GM10248 (cell line): ENCODE measurements at regions of chr21 and their contacts with region 1.

Region 1: DNA sequence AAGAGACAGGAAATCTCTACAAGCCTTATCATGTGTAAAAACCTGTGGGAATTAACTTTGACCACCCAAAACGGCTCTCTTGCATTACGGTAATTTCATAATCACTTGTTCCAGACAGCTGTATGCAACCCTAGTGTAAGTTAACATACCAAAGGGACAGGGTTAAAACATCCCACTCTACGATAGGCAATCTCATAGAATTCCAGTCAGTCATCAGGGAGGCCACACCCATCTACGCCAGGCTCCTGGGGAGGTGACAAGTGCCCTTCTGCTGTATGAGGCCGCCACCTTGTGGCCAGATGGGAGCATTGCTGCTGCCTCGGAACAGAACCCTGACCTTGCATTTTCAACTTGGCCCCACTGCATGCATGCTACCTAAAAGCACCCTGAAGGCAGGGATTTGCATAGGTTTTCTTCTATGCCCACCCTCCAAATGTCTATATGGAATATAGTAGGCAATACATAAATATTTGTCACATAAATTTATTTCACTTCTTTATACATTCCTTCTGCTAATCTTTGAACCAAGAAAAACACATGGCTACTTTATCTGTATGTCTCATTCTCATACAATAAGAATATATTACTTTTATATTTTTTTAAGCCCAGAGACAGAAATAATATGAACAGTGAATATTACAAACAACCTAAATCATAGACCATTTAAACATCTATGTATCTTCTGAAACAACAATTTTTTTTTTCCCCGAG is 12.6 kb downstream of the HSF2BP start:
- DNase-seq: peak; percentile 86
- CTCF ChIP-seq: peak; percentile 99

Region 2: DNA sequence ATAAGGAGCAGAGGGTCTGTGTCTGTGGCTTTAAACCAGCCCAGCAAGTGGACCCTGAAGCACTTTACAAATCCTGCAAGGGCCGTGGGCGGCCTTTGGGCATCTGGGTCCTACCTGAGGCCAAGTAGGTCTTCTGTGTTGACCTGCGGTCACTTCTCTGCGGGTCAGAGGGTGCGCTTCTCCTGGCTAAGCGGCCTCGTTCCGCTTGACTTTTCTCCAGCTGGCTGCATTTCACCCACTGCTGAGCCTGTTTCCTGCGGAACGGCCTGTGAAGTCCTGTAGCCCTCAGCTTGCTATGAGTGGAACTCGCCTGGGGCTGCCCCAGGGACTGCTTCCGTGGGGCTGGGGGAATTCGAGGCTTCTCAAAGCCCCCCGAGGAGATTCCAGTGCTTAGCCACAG is 1089.7 kb before region 1 on chr21:
- CTCF ChIA-PET with region 1: no interaction called
- POLR2A ChIA-PET with region 1: no interaction called
- DNase-seq: no peak
- CTCF ChIP-seq: no peak

Region 3: DNA sequence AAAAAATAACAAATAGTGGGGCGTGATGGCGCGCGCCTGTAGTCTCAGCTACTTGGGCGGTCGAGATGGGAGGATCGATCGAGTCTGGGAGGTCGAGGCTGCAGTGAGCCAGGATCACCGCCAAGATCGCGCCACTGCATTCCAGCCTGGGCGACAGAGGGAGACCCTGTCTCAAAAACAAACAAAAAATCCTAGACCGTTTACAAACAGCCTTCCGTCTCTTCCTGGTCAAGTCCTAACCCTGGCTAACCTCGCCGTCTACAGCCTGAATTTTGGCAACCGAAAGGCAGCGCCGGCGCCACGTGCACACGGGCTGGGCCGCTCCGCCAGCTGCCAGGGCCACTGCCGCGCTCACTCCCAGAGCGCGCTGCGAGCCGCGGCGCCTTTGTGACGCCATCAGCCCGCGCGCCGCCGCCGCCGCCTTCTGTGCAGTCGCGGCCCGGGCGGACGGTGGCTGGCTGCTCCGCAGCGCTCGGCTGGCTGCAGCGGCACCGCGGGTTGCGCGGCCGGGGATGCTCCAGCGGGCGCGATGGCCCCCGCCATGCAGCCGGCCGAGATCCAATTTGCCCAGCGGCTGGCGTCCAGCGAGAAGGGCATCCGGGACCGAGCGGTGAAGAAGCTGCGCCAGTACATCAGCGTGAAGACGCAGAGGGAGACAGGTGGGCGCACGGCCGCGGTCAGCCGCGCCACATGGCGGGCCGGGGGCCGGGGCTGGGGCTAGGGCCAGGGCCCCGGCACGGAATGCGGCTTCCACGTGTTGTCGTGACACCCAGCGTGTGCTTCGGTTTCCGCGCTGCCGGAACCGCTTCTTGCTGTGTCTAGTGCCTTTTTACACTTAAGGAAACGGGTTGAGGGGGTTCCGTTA is 12.7 kb after region 1 on chr21 and contains the starts of genes HSF2BP and RRP1B:
- CTCF ChIA-PET with region 1: interaction called, 18 read pairs
- POLR2A ChIA-PET with region 1: no interaction called
- DNase-seq: peak; percentile 95
- CTCF ChIP-seq: no peak